Heart right ventricle (tissue), 16 donors: ENCODE measurements at regions of chr11 and their contacts with region 1.

Region 1: GRCh38 chr11:12673924-12674570 is at the start of gene TEAD1:
- DNase-seq: peak; percentile 96 to 98
- ATAC-seq: peak; percentile 93 to 99 (median 96)
- H3K4me3 ChIP-seq: peak within 1 kb of the TSS; percentile 54 to 98 (median 74)
- H3K27ac ChIP-seq: peak within 1 kb of the TSS; percentile 79 to 99 (median 95)
- H3K4me1 ChIP-seq: peaks cover 0 to 42% (median 31%) of the 10 kb centered on the region in 9 donors
- H3K27me3 ChIP-seq: peaks cover 0 to 58% (median 0%) of the 10 kb centered on the region in 7 donors
- CTCF ChIP-seq: no peak
- total RNA-seq, gene TEAD1: 107 to 138 (median 117) TPM

Region 2: GRCh38 chr11:12331239-12331874 is 342.7 kb before region 1 on chr11:
- intact Hi-C with region 1: loop called in 1 of 10 experiments (anchors 5 kb)
- DNase-seq: peak; percentile 74 to 88
- ATAC-seq: peak; percentile 73 to 88 (median 84)
- H3K4me3 ChIP-seq: no peak overlapping the region
- H3K27ac ChIP-seq: no peak overlapping the region
- H3K4me1 ChIP-seq: peaks cover 0 to 8% (median 4%) of the 10 kb centered on the region in 9 donors
- H3K27me3 ChIP-seq: no peaks in the 10 kb centered on the region
- CTCF ChIP-seq: peak; percentile 42 to 89 (median 81)

Region 3: DNA sequence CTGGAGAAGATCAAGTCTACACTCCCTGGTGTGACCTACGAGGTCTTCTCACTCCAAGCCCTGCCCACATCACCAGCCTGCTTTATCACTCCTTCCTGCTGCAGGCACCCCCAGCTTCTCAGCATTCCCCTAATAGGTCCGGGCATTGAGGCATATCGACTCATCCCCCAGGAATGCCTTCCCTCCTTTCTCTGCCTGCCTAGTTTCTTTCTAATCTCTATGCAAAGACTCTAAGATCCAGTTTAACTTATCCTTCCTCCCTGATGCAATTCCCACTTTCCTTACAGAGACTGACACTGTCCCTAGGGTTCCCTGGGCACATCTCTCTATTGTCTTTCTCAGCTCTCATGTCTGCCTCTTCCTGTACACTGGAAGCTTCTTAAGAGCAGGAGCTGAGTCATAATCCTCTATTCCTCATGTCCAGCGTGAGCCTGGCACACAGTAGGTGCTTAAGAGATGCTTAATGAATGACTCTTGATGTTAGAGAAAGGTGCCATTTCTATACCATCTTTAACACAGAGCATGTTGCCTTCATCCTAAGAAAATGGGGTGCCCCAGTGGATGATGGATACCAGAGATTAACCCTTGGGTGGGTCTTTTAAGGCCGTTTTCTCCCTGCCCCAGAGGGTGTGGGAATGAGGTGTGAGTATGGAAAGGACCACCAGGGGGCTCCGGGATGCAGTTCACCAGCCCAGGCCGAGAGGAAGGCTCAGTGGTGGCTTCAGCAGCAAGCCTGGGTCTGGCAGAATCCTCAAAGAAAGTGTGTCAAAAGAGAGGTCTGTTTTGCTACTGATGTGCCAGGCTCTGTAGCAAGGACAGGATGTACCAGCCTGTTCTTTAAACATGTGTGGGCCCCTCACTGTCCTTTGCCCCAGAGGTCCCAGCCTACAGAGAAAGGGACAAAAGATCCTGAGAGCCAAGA is 262.0 kb before region 1 on chr11:
- intact Hi-C with region 1: loop called in 4 of 10 experiments (anchors 5 to 10 kb)
- DNase-seq: peak; percentile 57 to 78
- ATAC-seq: peak; percentile 73 to 93 (median 85)
- H3K4me3 ChIP-seq: no peak overlapping the region
- H3K27ac ChIP-seq: peak overlapping the region in 4 of 10 donors; percentile 4 to 31 (median 10)
- H3K4me1 ChIP-seq: peaks cover 3 to 79% (median 53%) of the 10 kb centered on the region in 9 donors
- H3K27me3 ChIP-seq: no peaks in the 10 kb centered on the region
- CTCF ChIP-seq: peak; percentile 67 to 88 (median 80)

Region 4: GRCh38 chr11:12556788-12557384 is 117.2 kb before region 1 on chr11:
- intact Hi-C with region 1: no loop called
- DNase-seq: peak; percentile 65 to 83
- ATAC-seq: peak; percentile 40 to 90 (median 74)
- H3K4me3 ChIP-seq: no peak overlapping the region
- H3K27ac ChIP-seq: peak overlapping the region in 9 of 10 donors; percentile 5 to 79 (median 66)
- H3K4me1 ChIP-seq: peaks cover 5 to 32% (median 25%) of the 10 kb centered on the region in 9 donors
- H3K27me3 ChIP-seq: no peaks in the 10 kb centered on the region
- CTCF ChIP-seq: no peak

Region 5: DNA sequence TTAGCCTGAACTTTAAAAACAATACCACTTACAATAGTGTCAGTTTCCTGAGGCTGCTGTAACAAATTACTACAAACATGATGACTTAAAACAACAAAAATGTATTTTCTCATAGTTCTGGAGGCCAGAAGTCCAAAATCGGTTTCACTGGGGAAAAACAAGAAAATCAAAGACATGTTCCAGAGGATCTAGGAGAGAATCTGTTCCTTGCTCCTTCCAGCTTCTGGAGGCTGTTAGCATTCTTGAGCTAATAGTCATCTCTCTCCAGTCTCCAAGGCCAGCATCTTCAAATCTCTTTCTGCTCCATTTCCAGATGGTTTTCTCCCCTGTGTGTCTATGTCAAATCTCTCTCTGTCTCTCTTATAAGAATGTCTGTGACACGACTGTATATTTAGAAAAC is 67.5 kb before region 1 on chr11:
- intact Hi-C with region 1: loop called in 4 of 10 experiments (anchors 2 to 10 kb)
- DNase-seq: no peak
- ATAC-seq: no peak
- H3K4me3 ChIP-seq: no peak overlapping the region
- H3K27ac ChIP-seq: no peak overlapping the region
- H3K4me1 ChIP-seq: peaks cover 0 to 29% (median 5%) of the 10 kb centered on the region in 9 donors
- H3K27me3 ChIP-seq: no peaks in the 10 kb centered on the region
- CTCF ChIP-seq: no peak

Region 6: DNA sequence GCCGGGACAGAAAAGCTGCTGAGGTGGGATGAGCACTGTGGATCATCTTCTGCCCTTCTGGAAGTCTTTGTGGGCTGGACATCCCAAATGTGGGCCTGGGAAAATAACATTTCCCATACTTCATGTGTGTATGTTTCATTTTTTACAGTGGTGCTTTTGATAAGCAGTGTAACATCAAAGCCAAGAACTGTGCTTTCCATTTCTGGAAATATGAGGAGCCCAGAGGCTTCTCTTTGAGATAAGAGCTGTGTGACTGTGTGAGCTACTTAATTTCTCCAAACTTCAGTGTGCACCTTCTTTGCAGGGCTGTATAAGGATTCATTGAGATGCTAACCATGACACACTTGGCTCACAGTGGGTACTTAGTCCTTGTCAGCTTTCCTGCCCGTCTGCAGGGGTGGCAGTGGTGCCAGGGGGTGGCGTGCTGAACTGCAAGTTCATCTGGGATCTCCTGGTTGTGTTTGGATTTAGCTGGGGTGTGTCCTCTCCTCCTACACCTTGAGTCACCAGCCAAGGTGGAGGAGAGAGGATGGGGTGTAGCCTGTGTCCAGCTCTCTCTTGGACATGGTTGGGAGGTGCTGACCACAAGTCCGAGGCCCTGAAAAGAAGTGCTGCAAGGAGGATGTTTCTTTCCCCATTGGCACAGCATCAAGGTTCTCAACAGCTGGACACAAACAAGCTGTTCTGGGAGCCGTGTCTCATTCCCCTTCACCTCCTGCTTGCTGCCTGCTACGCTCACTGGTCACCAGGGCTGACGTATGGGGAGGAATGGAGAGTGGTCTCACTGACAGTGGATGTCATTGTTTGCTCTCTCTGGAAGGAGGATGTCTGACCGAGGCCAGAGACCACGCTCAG is 139.6 kb after region 1 on chr11:
- intact Hi-C with region 1: loop called in 4 of 10 experiments (anchors 5 to 10 kb)
- DNase-seq: peak in 1 of 2 donors; percentile 24
- ATAC-seq: peak; percentile 12 to 50 (median 32)
- H3K4me3 ChIP-seq: no peak overlapping the region
- H3K27ac ChIP-seq: peak overlapping the region in 8 of 10 donors; percentile 10 to 78 (median 54)
- H3K4me1 ChIP-seq: peaks cover 15 to 77% (median 60%) of the 10 kb centered on the region in 9 donors
- H3K27me3 ChIP-seq: no peaks in the 10 kb centered on the region
- CTCF ChIP-seq: peak in 1 of 9 donors; percentile 13

Region 7: GRCh38 chr11:12888525-12889158 is 214.6 kb after region 1 on chr11:
- intact Hi-C with region 1: loop called in 9 of 10 experiments (anchors 1 to 10 kb)
- DNase-seq: peak; percentile 85 to 90
- ATAC-seq: peak; percentile 75 to 91 (median 84)
- H3K4me3 ChIP-seq: no peak overlapping the region
- H3K27ac ChIP-seq: peak overlapping the region in 9 of 10 donors; percentile 48 to 83 (median 65)
- H3K4me1 ChIP-seq: peaks cover 10 to 50% (median 30%) of the 10 kb centered on the region in 9 donors
- H3K27me3 ChIP-seq: no peaks in the 10 kb centered on the region
- CTCF ChIP-seq: peak; percentile 63 to 87 (median 76)

Region 8: DNA sequence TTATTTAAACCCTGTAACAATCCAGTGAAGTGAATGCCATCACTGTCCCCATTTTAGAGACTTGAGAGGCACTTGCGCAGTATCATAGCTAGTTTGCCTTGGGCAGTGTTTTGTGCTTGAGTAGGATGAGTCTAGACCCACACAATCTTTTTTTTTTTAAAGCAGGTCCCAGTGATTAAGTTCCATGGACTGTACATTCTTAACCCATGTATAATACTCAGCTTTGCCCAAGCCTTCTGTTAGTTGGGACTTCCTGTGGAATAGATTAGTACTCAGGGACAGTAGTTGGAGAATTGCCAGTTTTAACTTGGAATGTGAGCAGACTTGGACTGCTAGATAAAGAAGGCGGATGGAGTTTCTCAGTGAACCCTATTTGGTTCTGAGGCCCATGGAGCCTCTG is 226.4 kb after region 1 on chr11:
- intact Hi-C with region 1: no loop called
- DNase-seq: no peak
- ATAC-seq: peak in 7 of 8 donors; percentile 25 to 66 (median 53)
- H3K4me3 ChIP-seq: no peak overlapping the region
- H3K27ac ChIP-seq: peak overlapping the region in 7 of 10 donors; percentile 42 to 90 (median 83)
- H3K4me1 ChIP-seq: peaks cover 0 to 37% (median 28%) of the 10 kb centered on the region in 9 donors
- H3K27me3 ChIP-seq: no peaks in the 10 kb centered on the region
- CTCF ChIP-seq: no peak